Aorta (tissue), 5 donors: ENCODE measurements at regions of chr18 and their contacts with region 1.

Region 1: GRCh38 chr18:4106407-4107033 is 348.6 kb downstream of the DLGAP1 start:
- DNase-seq: peak; percentile 64 to 89
- ATAC-seq: peak; percentile 88
- H3K4me3 ChIP-seq: peak overlapping the region; percentile 26 to 76
- H3K27ac ChIP-seq: no peak overlapping the region
- H3K4me1 ChIP-seq: no peaks in the 10 kb centered on the region
- H3K27me3 ChIP-seq: no peaks in the 10 kb centered on the region

Region 2: DNA sequence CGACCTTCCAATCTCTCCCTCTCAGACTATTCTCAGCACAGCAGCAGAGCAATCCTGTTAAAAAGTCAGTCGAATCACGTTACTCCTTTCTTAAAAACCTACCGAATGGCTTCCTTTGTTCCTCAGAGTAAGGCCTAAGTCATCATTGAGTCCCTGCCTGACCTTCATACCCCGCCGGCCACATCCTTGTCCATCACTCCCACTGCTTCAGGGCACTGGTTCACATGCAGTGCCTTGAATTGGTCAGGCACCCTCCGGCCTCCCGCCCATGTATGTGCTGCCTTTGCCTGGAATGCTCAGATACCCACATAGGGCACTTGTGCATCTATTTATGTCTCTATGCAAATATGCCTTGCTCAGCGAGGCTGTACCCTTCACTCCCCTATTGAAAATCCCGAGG is 142.2 kb after region 1 on chr18:
- intact Hi-C with region 1: loop called in 1 of 2 experiments (anchors 10 kb)
- DNase-seq: no peak
- ATAC-seq: no peak
- H3K4me3 ChIP-seq: no peak overlapping the region
- H3K27ac ChIP-seq: no peak overlapping the region
- H3K4me1 ChIP-seq: no peaks in the 10 kb centered on the region
- H3K27me3 ChIP-seq: no peaks in the 10 kb centered on the region

Region 3: DNA sequence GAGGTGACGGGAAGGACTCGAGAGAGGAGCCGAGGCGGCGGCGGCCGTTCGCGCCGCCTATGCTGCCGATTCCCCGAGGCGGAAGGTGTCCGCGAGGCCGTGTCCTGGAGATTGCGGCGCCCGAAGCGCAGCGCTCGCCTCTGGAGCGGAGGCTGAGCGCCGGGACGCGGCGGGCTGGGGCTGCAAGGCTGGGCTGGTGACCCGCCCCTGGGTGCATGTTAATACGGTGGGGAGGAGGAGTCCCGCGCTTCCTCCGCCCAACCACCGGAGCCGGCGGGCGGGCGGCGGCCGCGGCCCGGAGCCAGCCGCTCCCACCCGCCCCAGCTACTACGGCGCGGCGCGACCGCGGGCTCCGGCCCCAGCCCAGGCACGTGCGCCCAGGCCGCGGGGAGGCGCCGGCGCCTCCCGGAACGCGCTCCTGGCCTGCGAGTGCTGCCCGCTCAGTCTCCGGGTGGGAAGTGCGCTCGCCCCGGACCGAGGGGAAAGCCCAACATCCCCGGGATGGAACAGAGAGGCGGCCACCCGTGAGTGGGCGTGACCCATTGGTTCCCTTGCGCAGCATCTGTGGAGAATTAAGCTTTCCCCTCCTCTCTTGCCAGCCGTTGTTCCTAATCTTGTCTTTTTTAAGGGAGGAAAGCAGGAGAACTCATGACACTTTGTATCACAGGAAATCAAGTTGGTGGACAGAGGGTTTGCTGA is 348.7 kb after region 1 on chr18 and contains the start of gene DLGAP1:
- intact Hi-C with region 1: loop called in 1 of 2 experiments (anchors 10 kb)
- DNase-seq: peak; percentile 62 to 87
- ATAC-seq: peak; percentile 79
- H3K4me3 ChIP-seq: peak within 1 kb of the TSS; percentile 32 to 50
- H3K27ac ChIP-seq: no peak within 1 kb of the TSS
- H3K4me1 ChIP-seq: no peaks in the 10 kb centered on the region
- H3K27me3 ChIP-seq: no peaks in the 10 kb centered on the region
- total RNA-seq, gene DLGAP1: 6.2 to 6.6 TPM

Region 4: DNA sequence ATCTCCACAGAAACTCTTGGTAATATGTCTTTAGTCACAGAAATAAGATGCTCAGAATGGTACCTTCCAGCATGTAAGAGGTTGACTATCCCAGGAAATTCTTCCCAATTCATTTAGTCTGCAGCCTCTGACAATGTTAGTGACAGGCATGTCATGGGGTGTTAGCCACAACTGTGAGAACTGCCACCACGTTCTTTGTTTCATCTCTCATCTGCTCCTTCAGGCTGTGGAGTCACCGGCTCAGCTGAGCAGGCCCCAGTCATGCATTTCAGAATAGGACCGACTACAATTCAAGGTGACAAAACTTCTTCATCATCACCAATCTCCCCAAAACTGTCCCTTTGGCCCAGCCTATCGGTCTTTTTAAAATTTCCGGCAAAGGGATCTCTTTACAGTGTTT is 923.1 kb after region 1 on chr18:
- intact Hi-C with region 1: loop called in 1 of 2 experiments (anchors 10 kb)
- DNase-seq: no peak
- ATAC-seq: no peak
- H3K4me3 ChIP-seq: no peak overlapping the region
- H3K27ac ChIP-seq: no peak overlapping the region
- H3K4me1 ChIP-seq: peaks cover 0 to 2% of the 10 kb centered on the region in 2 donors
- H3K27me3 ChIP-seq: no peaks in the 10 kb centered on the region

Region 5: GRCh38 chr18:5052491-5052890 is 946.0 kb after region 1 on chr18:
- intact Hi-C with region 1: loop called (anchors 2 to 5 kb)
- DNase-seq: no peak
- ATAC-seq: no peak
- H3K4me3 ChIP-seq: no peak overlapping the region
- H3K27ac ChIP-seq: no peak overlapping the region
- H3K4me1 ChIP-seq: no peaks in the 10 kb centered on the region
- H3K27me3 ChIP-seq: peaks cover 0 to 2% of the 10 kb centered on the region in 2 donors

Region 6: DNA sequence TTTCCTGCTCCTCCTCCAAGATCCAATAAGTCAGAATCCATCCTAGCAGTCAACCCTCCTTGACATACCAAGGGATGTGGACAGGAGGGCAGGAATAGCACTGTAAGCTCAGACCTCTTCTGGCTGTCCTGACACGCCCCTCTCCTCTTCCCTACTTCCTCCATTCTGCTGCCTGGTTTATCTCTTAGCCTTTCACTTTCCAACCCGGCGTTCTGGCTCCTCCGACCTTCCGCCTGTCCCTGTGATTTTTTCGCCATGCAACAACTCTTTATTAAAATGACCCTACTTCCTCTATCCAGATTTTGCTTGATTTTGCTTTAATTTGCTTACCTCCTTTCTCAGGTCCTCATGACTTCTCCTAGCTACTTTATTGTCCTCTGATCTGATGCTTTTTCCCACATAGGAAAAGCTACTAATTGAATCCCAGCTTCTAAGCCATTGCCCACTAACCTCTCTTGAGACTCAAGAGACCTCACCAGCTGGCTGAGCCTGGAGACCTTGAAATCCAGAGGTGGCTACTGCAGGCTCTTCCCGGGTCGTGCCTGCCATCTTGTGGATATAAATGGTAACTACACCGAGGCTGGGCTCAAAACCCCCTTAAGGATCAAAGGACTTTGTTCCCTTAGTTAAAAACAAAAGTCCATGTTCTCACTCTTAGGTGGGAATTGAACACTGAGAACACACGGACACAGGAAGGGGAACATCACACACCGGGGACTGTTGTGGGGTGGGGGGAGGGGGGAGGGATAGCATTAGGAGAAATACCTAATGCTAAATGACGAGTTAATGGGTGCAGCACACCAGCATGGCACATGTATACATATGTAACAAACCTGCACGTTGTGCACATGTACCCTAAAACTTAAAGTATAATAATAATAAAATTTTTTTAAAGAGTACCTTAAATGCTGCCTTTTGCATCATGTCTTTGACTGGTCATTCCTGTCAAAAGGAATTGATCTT is 951.1 kb after region 1 on chr18:
- intact Hi-C with region 1: loop called (anchors 2 to 5 kb)
- DNase-seq: peak; percentile 65 to 79
- ATAC-seq: peak; percentile 74
- H3K4me3 ChIP-seq: no peak overlapping the region
- H3K27ac ChIP-seq: no peak overlapping the region
- H3K4me1 ChIP-seq: no peaks in the 10 kb centered on the region
- H3K27me3 ChIP-seq: no peaks in the 10 kb centered on the region